ENCODE measurements at regions of chr6 and their contacts with region 1.

Region 1: GRCh38 chr6:158344534-158344933 is 32.3 kb downstream of the TULP4 start:
- DNase-seq: no peak
- ATAC-seq: no peak
- H3K4me3 ChIP-seq: no peak overlapping the region
- H3K4me3 Mint-ChIP-seq: no peak overlapping the region
- H3K27ac ChIP-seq: no peak overlapping the region
- H3K27ac Mint-ChIP-seq: no peak overlapping the region
- H3K4me1 ChIP-seq: no peaks in the 10 kb centered on the region
- H3K4me1 Mint-ChIP-seq: peaks cover 11 to 17% (median 11%) of the 10 kb centered on the region in 3 donors
- H3K27me3 ChIP-seq: no peaks in the 10 kb centered on the region
- H3K27me3 Mint-ChIP-seq: no peaks in the 10 kb centered on the region

Region 2: DNA sequence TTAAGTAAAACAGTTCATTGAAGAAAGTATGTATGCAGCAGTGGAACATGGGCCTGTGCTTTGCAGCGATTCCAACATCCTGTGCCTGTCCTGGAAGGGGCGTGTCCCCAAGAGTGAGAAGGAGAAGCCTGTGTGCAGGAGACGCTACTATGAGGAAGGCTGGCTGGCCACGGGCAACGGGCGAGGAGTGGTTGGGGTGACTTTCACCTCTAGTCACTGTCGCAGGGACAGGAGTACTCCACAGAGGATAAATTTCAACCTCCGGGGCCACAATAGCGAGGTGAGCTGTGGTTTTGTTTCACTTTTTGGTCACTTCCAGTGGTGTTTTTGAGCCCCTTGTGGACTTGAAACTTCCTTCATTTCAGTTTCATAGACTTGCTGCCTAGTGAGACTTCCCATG is 30.5 kb before region 1 on chr6:
- CTCF ChIA-PET with region 1: no interaction called
- POLR2A ChIA-PET with region 1: no interaction called
- DNase-seq: peak in 4 of 35 experiments; percentile 1 to 19 (median 2)
- ATAC-seq: no peak
- H3K4me3 ChIP-seq: no peak overlapping the region
- H3K4me3 Mint-ChIP-seq: no peak overlapping the region
- H3K27ac ChIP-seq: no peak overlapping the region
- H3K27ac Mint-ChIP-seq: no peak overlapping the region
- H3K4me1 ChIP-seq: no peaks in the 10 kb centered on the region
- H3K4me1 Mint-ChIP-seq: peaks cover 15 to 29% (median 23%) of the 10 kb centered on the region in 3 donors
- H3K27me3 ChIP-seq: no peaks in the 10 kb centered on the region
- H3K27me3 Mint-ChIP-seq: no peaks in the 10 kb centered on the region

Region 3: GRCh38 chr6:158361961-158362669 is 17.6 kb after region 1 on chr6:
- CTCF ChIA-PET with region 1: no interaction called
- POLR2A ChIA-PET with region 1: interaction called in 1 of 2 experiments, 10 read pairs
- DNase-seq: no peak
- ATAC-seq: no peak
- H3K4me3 ChIP-seq: no peak overlapping the region
- H3K4me3 Mint-ChIP-seq: no peak overlapping the region
- H3K27ac ChIP-seq: no peak overlapping the region
- H3K27ac Mint-ChIP-seq: no peak overlapping the region
- H3K4me1 ChIP-seq: peaks cover 9 to 12% of the 10 kb centered on the region in 2 experiments
- H3K4me1 Mint-ChIP-seq: peaks cover 35 to 48% (median 42%) of the 10 kb centered on the region in 3 donors
- H3K27me3 ChIP-seq: no peaks in the 10 kb centered on the region
- H3K27me3 Mint-ChIP-seq: no peaks in the 10 kb centered on the region

Measured in T-cell (primary cell).